WTC11 (cell line): ENCODE measurements at regions of chr12 and their contacts with region 1.

Region 1: GRCh38 chr12:53424626-53425514 is 1.2 kb downstream of the AMHR2 start:
- DNase-seq: no peak
- ATAC-seq: no peak
- H3K4me3 Mint-ChIP-seq: no peak overlapping the region
- H3K27ac Mint-ChIP-seq: no peak overlapping the region
- H3K4me1 Mint-ChIP-seq: peaks cover 10% of the 10 kb centered on the region
- H3K27me3 Mint-ChIP-seq: no peaks in the 10 kb centered on the region
- CTCF ChIP-seq: no peak

Region 2: DNA sequence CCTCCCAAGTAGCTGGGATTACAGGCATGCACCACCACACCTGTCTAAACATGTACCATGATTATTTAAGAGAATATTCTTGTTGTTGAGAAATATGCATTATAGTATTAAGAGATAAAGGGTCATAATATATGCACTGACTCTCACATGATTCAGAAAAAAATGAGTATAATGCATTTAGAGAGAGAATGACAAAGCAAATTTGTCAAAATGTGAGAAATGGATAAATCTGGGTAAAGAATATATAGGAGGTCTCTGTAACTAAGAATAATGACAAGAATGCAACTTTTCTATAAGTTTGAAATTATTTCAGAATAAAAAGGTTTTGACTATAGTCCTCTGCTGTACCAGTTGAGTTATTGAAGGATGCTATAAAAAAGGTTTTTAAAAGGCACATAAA is 272.5 kb before region 1 on chr12:
- CTCF ChIA-PET with region 1: no interaction called
- POLR2A ChIA-PET with region 1: no interaction called
- DNase-seq: no peak
- ATAC-seq: no peak
- H3K4me3 Mint-ChIP-seq: no peak overlapping the region
- H3K27ac Mint-ChIP-seq: no peak overlapping the region
- H3K4me1 Mint-ChIP-seq: peaks cover 3% of the 10 kb centered on the region; the same call in 1 of the 2 replicates
- H3K27me3 Mint-ChIP-seq: peaks cover 41% of the 10 kb centered on the region
- CTCF ChIP-seq: no peak

Region 3: GRCh38 chr12:53327435-53328042 is 97.3 kb before region 1 on chr12:
- CTCF ChIA-PET with region 1: interaction called, 18 read pairs
- POLR2A ChIA-PET with region 1: no interaction called
- DNase-seq: no peak
- ATAC-seq: no peak
- H3K4me3 Mint-ChIP-seq: no peak overlapping the region
- H3K27ac Mint-ChIP-seq: no peak overlapping the region
- H3K4me1 Mint-ChIP-seq: peaks cover 21% of the 10 kb centered on the region
- H3K27me3 Mint-ChIP-seq: peaks cover 79% of the 10 kb centered on the region
- CTCF ChIP-seq: no peak; the same call in 1 of the 2 replicates

Region 4: DNA sequence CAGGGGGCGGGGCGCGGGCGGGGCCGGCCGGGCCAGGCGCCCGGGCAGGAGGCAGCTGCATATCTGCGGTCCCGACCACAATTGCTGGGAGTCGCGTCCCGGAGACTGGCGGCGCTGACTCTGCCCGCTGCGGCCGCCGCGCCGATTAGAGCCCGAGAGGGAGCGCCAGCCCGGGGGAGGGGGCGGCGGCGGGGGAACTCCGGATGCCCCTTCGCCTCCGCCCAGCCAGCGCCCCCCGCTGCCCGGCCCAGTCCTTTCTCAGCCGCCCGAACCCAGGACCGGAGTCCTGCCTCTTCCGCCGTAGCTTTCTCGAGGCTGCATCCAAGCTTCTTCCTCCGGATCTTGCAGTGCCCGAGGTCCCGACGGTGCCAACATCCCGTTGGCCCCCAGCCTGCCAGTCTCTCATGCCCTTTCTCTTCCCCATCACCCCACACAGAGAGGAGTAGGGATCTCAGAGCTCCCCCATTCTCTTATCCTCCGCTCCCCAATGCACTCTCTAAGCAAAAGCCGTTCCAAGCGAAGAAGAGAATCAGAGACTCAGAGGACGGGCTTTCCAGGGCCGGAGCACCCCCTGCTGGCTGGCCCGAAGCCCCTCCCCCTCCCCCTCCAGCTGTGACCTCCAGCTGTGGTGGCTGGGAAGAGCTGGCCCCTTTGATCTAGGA is 79.9 kb before region 1 on chr12:
- CTCF ChIA-PET with region 1: interaction called, 34 read pairs
- POLR2A ChIA-PET with region 1: interaction called, 4 read pairs
- DNase-seq: peak; percentile 72
- ATAC-seq: peak; percentile 65
- H3K4me3 Mint-ChIP-seq: peak overlapping the region; percentile 96
- H3K27ac Mint-ChIP-seq: peak overlapping the region; percentile 79
- H3K4me1 Mint-ChIP-seq: peaks cover 13% of the 10 kb centered on the region
- H3K27me3 Mint-ChIP-seq: peaks cover 48% of the 10 kb centered on the region
- CTCF ChIP-seq: no peak

Region 5: GRCh38 chr12:53379389-53380103 is 45.3 kb before region 1 on chr12:
- CTCF ChIA-PET with region 1: interaction called, 22 read pairs
- POLR2A ChIA-PET with region 1: interaction called, 6 read pairs
- DNase-seq: peak; percentile 95
- ATAC-seq: peak; percentile 87
- H3K4me3 Mint-ChIP-seq: no peak overlapping the region
- H3K27ac Mint-ChIP-seq: no peak overlapping the region
- H3K4me1 Mint-ChIP-seq: peaks cover 27% of the 10 kb centered on the region
- H3K27me3 Mint-ChIP-seq: peaks cover 3% of the 10 kb centered on the region; the same call in 1 of the 2 replicates
- CTCF ChIP-seq: no peak

Region 6: GRCh38 chr12:53441040-53441833 is 16.4 kb after region 1 on chr12 and contains the start of gene PRR13:
- CTCF ChIA-PET with region 1: interaction called, 14 read pairs
- POLR2A ChIA-PET with region 1: no interaction called
- DNase-seq: peak; percentile 99
- ATAC-seq: peak; percentile 99
- H3K4me3 Mint-ChIP-seq: peak within 1 kb of the TSS; percentile 94
- H3K27ac Mint-ChIP-seq: peak within 1 kb of the TSS; percentile 99
- H3K4me1 Mint-ChIP-seq: peaks cover 32% of the 10 kb centered on the region
- H3K27me3 Mint-ChIP-seq: no peaks in the 10 kb centered on the region
- CTCF ChIP-seq: no peak
- total RNA-seq, gene PRR13: 150 to 187 TPM (median 155 TPM) in 3 replicates

Region 7: GRCh38 chr12:53451661-53452158 is 26.8 kb after region 1 on chr12 and contains the start of gene PCBP2:
- CTCF ChIA-PET with region 1: interaction called, 18 read pairs
- POLR2A ChIA-PET with region 1: no interaction called
- DNase-seq: peak; percentile 98
- ATAC-seq: peak; percentile 95
- H3K4me3 Mint-ChIP-seq: peak within 1 kb of the TSS; percentile 96
- H3K27ac Mint-ChIP-seq: peak within 1 kb of the TSS; percentile 100
- H3K4me1 Mint-ChIP-seq: peaks cover 23% of the 10 kb centered on the region
- H3K27me3 Mint-ChIP-seq: no peaks in the 10 kb centered on the region
- CTCF ChIP-seq: peak; percentile 50; the same call in 1 of the 2 replicates
- total RNA-seq, gene PCBP2: 981 to 1,004 TPM (median 984 TPM) in 3 replicates

Region 8: DNA sequence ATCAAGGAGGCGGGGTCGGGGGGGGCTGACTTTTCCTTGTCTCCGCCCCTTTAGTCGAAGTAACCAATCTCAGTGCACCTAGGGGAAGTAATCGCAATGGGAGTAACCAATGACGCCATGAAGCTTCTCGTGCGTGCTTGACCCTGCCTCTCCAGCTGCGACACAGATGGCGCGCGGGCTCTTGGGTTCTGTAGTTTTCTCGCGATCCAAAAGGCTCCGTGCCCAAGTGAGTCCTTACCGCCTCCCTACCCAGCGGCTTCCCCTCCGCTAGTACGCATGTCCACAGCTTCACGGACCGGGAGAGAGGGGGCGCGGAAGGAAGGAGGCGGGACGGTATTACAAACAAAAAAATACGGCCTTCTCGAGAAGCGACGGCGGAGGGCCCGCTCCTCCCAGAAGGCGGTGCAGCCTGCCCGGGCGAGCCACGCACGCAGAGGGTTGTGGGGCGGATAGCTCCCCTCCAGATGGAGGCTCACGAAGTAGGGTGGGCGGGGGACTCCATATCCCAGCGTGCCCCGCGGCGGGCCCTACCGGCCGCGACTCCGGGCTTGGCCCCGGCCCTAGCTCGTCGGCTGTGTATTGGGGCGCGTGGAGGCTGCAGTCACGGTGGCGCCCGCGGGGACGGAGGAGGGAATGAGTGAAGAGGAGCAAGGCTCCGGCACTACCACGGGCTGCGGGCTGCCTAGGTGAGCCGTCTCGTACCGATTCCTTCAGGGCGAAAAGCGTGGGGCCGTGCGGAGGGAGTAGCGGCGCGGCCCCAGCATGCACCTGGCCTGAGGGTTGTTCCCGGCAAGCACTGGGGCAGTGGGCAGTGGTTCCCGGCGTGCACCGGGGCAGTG is 76.1 kb after region 1 on chr12 and contains the start of gene TARBP2:
- CTCF ChIA-PET with region 1: interaction called, 11 read pairs
- POLR2A ChIA-PET with region 1: interaction called, 4 read pairs
- DNase-seq: peak; percentile 98
- ATAC-seq: peak; percentile 74
- H3K4me3 Mint-ChIP-seq: peak within 1 kb of the TSS; percentile 86
- H3K27ac Mint-ChIP-seq: peak within 1 kb of the TSS; percentile 94
- H3K4me1 Mint-ChIP-seq: peaks cover 40% of the 10 kb centered on the region
- H3K27me3 Mint-ChIP-seq: no peaks in the 10 kb centered on the region
- CTCF ChIP-seq: no peak
- total RNA-seq, gene TARBP2: 69.0 to 74.0 TPM (median 69.1 TPM) in 3 replicates